Cardiac septum (tissue), 1 donor: ENCODE measurements at regions of chr12 and their contacts with region 1.

Region 1: DNA sequence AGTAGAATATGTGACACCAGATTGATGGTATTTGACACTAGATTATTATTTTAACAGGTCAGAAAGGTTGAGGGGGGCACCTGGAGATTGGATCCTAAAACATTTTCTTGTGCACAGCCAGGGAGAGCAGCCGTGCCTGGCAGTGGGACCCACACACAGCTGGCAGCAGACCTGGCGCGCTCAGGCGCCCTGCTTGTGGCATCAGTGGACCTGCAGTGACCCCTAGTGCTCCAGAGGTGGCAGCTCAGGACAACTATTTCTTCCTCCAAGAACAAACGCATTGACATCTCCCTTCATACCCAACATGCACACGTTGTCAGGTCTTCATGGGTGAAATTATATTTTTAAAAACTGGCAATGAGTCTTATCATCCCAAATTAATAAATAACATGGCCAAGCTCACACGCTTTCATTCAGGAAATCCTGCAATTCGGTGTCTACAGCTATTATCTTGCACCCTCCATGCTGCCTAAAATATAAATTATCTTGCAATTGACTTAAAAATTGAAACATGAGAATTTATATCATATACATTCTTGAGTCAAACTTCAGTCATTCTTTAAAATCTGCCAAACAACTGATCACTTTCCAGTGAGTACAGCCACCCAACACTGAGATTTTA is 7.7 kb upstream of the TMEM132D start:
- DNase-seq: no peak

Region 2: GRCh38 chr12:128259556-128260070 is 1651.9 kb before region 1 on chr12:
- intact Hi-C with region 1: loop called (anchors 10 kb)
- DNase-seq: no peak

Region 3: DNA sequence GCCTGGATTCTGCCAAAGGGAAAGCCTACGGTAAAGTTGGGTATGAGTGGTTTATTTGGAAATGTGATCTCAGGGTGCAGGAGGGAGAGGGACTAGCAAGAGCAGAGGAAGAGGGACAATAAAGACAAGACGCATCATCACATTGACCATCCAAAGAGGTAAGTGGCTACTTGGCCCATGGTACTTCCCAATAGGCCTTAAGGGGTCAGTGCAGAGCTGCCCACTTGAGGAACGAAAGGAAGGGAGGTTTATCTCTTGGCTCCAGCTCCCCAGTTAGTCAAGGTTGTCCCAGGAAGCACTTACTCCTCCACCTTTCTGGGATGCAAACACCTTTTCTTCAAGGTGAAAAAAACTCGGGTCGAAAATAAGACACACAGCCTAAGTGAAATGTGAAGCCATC is 331.7 kb before region 1 on chr12:
- intact Hi-C with region 1: no loop called
- DNase-seq: no peak

Region 4: DNA sequence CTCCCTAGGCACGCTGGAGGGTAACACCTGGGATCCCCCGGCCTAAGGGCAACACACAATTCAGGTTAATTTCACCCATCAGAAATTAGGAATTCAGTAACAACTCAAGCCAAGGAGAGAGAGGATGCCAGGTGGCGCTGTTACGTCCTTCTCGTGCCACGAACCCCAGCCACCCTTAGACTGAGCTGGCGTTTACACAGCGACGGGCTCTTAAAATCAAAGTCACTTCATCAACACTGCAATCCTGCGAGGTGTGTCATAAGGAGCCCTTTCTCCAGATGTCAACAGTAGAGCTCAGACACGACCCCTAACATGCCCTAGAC is 102.9 kb after region 1 on chr12:
- intact Hi-C with region 1: no loop called
- DNase-seq: peak; percentile 24